SK-N-SH (cell line): ENCODE measurements at regions of chr7 and their contacts with region 1.

Region 1: DNA sequence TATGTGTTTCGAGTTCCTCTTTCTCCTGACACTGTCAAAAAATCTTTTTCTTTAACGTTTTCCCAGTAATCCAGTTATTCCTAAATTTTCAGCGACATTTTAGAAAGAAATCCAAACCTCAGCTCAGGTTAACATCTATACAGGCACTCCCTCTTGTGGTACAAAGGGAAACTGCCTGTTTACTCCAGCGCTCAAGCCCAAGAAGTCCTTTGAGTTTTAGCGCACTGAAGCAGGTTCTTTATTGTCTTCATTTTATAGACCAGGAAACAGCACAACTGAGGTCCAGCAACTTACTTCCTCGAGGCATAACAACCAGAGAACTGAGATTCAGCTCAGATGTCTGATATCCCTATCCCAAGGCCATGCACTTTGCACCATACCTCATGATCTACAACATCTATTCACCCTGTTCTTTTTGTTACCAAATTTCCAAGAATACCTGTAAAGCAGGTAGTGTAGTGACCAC is 287.2 kb upstream of the MKLN1 start:
- DNase-seq: peak; percentile 80
- H3K4me3 ChIP-seq: no peak overlapping the region; a peak in 1 of 4 replicates
- H3K27ac ChIP-seq: peak overlapping the region; percentile 0 to 66; a peak in 2 of 4 replicates
- H3K4me1 ChIP-seq: peaks cover 4 to 16% of the 10 kb centered on the region in 2 experiments; a peak in 3 of 4 replicates
- H3K27me3 ChIP-seq: no peaks in the 10 kb centered on the region
- CTCF ChIP-seq: peak; percentile 100
- EP300 ChIP-seq: no peak
- RAD21 ChIP-seq: peak; percentile 97

Region 2: DNA sequence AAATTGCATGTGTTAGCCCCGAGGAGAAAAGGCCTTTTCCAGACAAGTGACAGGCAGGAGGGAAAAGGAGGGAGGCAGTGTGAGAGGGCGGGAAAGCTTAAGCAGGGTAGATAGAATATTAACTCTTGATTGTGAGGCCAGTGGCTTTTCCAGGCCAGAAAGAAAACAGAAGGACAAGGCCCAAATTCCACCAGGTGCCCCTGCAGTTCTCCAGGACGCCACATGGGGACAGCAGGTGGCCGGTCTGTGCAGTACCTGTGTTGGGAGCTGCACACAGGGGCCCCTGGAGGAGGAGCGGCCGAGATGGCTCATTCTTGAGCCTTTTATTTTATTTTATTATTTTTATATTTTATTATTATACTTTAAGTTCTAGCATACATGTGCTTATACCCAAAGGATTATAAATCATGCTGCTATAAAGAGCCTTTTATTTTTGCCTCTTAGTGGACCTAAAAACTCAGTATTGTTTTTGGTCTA is 165.2 kb before region 1 on chr7:
- CTCF ChIA-PET with region 1: interaction called, 22 read pairs
- POLR2A ChIA-PET with region 1: no interaction called
- DNase-seq: peak; percentile 71
- H3K4me3 ChIP-seq: no peak overlapping the region
- H3K27ac ChIP-seq: peak overlapping the region; percentile 5 to 100; a peak in 3 of 4 replicates
- H3K4me1 ChIP-seq: peaks cover 7 to 41% of the 10 kb centered on the region in 2 experiments
- H3K27me3 ChIP-seq: no peaks in the 10 kb centered on the region
- CTCF ChIP-seq: peak; percentile 80
- EP300 ChIP-seq: no peak
- RAD21 ChIP-seq: peak; percentile 68

Region 3: DNA sequence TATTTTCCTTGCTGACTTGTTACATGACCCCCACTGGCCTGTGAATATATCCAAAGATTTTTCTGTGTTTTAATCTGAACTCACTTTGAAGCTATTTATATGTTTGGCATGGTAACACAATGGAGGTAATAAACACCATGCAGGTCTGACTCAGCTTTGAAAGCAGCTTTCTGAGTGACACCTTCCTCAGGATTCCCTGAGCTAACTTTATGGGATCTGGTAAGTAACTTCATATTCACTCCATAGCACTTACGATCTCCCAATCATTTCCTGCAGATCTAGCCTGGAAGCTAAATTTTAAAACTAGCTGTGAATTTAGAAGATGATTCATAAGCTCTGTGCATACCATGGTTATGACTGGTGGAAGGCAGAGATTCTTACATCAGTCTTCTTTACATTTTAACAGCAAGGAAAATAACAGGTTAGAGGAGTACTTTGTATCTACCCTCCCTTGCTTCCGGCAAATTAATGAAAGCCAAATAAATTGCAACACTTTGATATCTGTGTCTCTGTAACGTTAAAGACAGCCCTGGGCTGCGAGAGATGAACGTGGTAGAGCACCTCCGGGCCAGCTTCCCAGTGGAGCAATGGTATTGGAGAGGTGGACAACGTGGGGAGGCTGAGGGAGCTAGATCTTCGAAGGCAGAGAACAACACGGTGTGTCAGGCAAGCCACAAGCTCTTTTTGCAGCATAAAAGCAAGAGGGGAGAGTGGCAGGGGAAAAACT is 136.3 kb before region 1 on chr7:
- CTCF ChIA-PET with region 1: interaction called, 32 read pairs
- POLR2A ChIA-PET with region 1: no interaction called
- DNase-seq: no peak
- H3K4me3 ChIP-seq: peak overlapping the region in 1 of 2 experiments; percentile 1; a peak in 1 of 4 replicates
- H3K27ac ChIP-seq: peak overlapping the region; percentile 81 to 100; a peak in 3 of 4 replicates
- H3K4me1 ChIP-seq: peaks cover 13 to 65% of the 10 kb centered on the region in 2 experiments
- H3K27me3 ChIP-seq: no peaks in the 10 kb centered on the region
- CTCF ChIP-seq: no peak
- EP300 ChIP-seq: peak; percentile 14 to 95; a peak in 3 of 4 replicates
- RAD21 ChIP-seq: no peak

Region 4: GRCh38 chr7:130982160-130982638 is 58.3 kb before region 1 on chr7:
- CTCF ChIA-PET with region 1: interaction called, 182 read pairs
- POLR2A ChIA-PET with region 1: no interaction called
- DNase-seq: peak; percentile 54
- H3K4me3 ChIP-seq: no peak overlapping the region
- H3K27ac ChIP-seq: no peak overlapping the region
- H3K4me1 ChIP-seq: peaks cover 0 to 13% of the 10 kb centered on the region in 2 experiments; a peak in 2 of 4 replicates
- H3K27me3 ChIP-seq: no peaks in the 10 kb centered on the region
- CTCF ChIP-seq: peak; percentile 97
- EP300 ChIP-seq: no peak
- RAD21 ChIP-seq: peak; percentile 86

Region 5: DNA sequence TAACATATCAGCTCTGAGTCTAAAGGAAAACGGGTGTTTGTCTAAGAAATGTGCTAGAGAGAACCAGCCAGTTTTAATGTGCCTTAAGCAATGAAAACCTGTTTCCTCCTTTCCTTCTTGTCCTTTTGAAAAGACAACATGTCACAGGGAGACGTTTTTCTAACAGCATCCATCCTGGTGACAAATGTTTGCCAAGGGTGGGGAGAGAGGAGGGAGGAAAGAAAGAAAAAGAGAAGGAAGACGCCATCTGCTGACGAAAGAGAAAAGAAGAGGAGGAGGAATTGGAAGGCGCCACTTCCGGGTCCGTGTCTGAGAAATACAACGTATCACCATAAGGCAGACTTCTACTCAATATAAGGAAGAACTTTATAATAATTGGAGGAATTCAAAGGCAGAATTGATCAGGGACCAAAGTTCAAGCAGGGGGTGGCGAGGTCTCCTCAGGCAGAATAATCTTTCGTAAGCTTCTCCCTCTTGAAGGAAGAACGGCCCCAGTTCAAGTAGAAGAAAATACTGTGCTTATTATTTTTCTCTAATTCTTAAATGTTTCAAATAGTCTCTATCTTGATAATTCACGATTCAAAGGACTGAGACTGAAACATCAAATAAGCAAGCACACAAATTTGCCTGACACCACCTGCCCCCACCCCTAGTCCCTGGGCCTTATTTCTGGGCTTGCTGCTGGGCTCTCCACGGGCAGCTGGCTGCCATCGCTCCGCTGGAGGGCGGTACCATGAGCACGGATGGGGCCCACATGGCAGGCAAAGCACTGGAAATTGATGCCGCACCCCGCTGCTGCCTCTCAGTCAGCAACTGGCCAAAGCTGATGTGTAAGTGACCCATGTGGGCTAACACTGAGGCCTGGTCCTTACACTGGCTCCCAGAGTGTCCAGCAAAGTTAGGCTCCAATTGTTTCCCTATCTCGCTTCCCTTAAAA is 32.8 kb before region 1 on chr7:
- CTCF ChIA-PET with region 1: interaction called, 13 read pairs
- POLR2A ChIA-PET with region 1: interaction called, 3 read pairs
- DNase-seq: peak; percentile 57
- H3K4me3 ChIP-seq: no peak overlapping the region
- H3K27ac ChIP-seq: peak overlapping the region; percentile 93 to 95
- H3K4me1 ChIP-seq: peaks cover 20 to 54% of the 10 kb centered on the region in 2 experiments
- H3K27me3 ChIP-seq: no peaks in the 10 kb centered on the region
- CTCF ChIP-seq: peak; percentile 81
- EP300 ChIP-seq: no peak
- RAD21 ChIP-seq: peak; percentile 73

Region 6: GRCh38 chr7:131057015-131057793 is 16.7 kb after region 1 on chr7:
- CTCF ChIA-PET with region 1: interaction called, 74 read pairs
- POLR2A ChIA-PET with region 1: no interaction called
- DNase-seq: no peak
- H3K4me3 ChIP-seq: no peak overlapping the region
- H3K27ac ChIP-seq: no peak overlapping the region
- H3K4me1 ChIP-seq: no peaks in the 10 kb centered on the region; a peak in 1 of 4 replicates
- H3K27me3 ChIP-seq: no peaks in the 10 kb centered on the region
- CTCF ChIP-seq: no peak
- EP300 ChIP-seq: no peak
- RAD21 ChIP-seq: no peak